ENCODE measurements at regions of chr3 and their contacts with region 1.

Region 1: GRCh38 chr3:66253790-66254620 is 33.2 kb downstream of the SLC25A26 start:
- DNase-seq: peak; percentile 46
- H3K4me3 ChIP-seq: no peak overlapping the region
- H3K27ac ChIP-seq: no peak overlapping the region
- H3K4me1 ChIP-seq: peaks cover 18% of the 10 kb centered on the region
- CTCF ChIP-seq: peak; percentile 86

Region 2: GRCh38 chr3:66302288-66302687 is 48.3 kb after region 1 on chr3:
- CTCF ChIA-PET with region 1: no interaction called
- POLR2A ChIA-PET with region 1: no interaction called
- intact Hi-C with region 1: no loop called
- DNase-seq: peak; percentile 26
- H3K4me3 ChIP-seq: no peak overlapping the region
- H3K27ac ChIP-seq: no peak overlapping the region
- H3K4me1 ChIP-seq: peaks cover 32% of the 10 kb centered on the region
- CTCF ChIP-seq: no peak

Region 3: GRCh38 chr3:66378256-66378823 is 124.3 kb after region 1 on chr3:
- CTCF ChIA-PET with region 1: no interaction called
- POLR2A ChIA-PET with region 1: no interaction called
- intact Hi-C with region 1: loop called (anchors 5 kb)
- DNase-seq: peak; percentile 57
- H3K4me3 ChIP-seq: no peak overlapping the region
- H3K27ac ChIP-seq: no peak overlapping the region
- H3K4me1 ChIP-seq: no peaks in the 10 kb centered on the region
- CTCF ChIP-seq: peak; percentile 86

Region 4: DNA sequence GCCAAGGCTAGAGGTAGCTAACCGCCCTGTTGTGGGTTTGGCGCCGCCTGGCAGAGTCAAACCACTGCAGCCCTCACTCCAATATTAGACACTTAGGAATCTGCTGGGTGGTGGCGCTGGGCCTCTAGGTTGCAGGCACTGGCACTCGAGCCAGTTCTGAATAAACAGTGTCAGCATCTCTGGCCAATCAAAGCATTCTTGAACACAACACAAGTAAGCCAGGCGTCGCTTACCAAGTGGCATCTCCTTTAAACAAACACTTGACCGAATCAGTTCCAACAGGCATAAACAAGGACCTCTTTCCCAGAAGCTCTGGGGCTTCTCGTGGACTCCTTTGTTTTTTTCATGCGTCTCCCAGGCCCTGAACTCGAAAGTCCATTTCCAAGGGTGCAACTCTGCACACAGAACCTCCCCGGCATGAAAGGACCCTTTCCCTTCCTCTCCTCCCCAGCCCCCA is 164.5 kb after region 1 on chr3:
- CTCF ChIA-PET with region 1: no interaction called
- POLR2A ChIA-PET with region 1: no interaction called
- intact Hi-C with region 1: no loop called
- DNase-seq: no peak
- H3K4me3 ChIP-seq: no peak overlapping the region
- H3K27ac ChIP-seq: no peak overlapping the region
- H3K4me1 ChIP-seq: no peaks in the 10 kb centered on the region
- CTCF ChIP-seq: no peak

Region 5: GRCh38 chr3:66816090-66816761 is 562.2 kb after region 1 on chr3:
- CTCF ChIA-PET with region 1: no interaction called
- POLR2A ChIA-PET with region 1: no interaction called
- intact Hi-C with region 1: loop called (anchors 1 kb)
- DNase-seq: peak; percentile 81
- H3K4me3 ChIP-seq: no peak overlapping the region
- H3K27ac ChIP-seq: no peak overlapping the region
- H3K4me1 ChIP-seq: no peaks in the 10 kb centered on the region
- CTCF ChIP-seq: peak; percentile 82

Measured in OCI-LY7 (cell line).